ENCODE measurements at regions of chr2 and their contacts with region 1.

Region 1: GRCh38 chr2:156400706-156401678 is 35.2 kb upstream of the GPD2 start:
- DNase-seq: peak; percentile 76
- ATAC-seq: peak; percentile 75
- H3K4me3 ChIP-seq: peak overlapping the region; percentile 72 to 97 (median 83)
- H3K27ac ChIP-seq: peak overlapping the region; percentile 38
- H3K4me1 ChIP-seq: peaks cover 36% of the 10 kb centered on the region
- H3K27me3 ChIP-seq: peaks cover 0 to 8% of the 10 kb centered on the region in 2 experiments; a peak in 1 of 5 replicates
- CTCF ChIP-seq: no peak
- EP300 ChIP-seq: no peak; a peak in 1 of 4 replicates
- POLR2A ChIP-seq: no peak
- RAD21 ChIP-seq: no peak

Region 2: DNA sequence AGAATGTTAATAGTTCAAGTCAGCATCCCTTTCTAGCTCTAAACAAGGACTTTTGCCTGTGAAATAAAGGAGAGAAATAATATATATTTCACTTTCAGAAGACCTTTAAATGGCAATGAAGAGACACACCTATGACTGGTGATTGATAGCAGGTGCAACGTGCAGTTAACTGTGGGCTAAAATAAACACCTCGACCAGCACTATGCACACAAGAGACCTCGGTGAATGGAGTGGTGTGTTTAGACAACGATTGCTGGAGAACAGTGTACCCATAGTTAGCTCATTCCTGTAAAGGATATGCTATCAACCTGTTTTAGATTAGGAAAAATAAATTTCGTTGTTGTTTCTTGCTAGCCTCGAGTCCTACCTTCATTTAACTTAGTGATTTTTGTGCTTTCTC is 211.8 kb before region 1 on chr2:
- CTCF ChIA-PET with region 1: no interaction called
- POLR2A ChIA-PET with region 1: no interaction called
- in situ Hi-C with region 1: no loop called
- intact Hi-C with region 1: loop called (anchors 5 kb)
- DNase-seq: peak; percentile 83
- ATAC-seq: peak; percentile 100
- H3K4me3 ChIP-seq: peak overlapping the region in 1 of 3 experiments; percentile 22; a peak in 1 of 6 replicates
- H3K27ac ChIP-seq: peak overlapping the region; percentile 30
- H3K4me1 ChIP-seq: peaks cover 22% of the 10 kb centered on the region
- H3K27me3 ChIP-seq: no peaks in the 10 kb centered on the region
- CTCF ChIP-seq: no peak
- EP300 ChIP-seq: peak in 1 of 2 experiments; percentile 68; a peak in 1 of 4 replicates
- POLR2A ChIP-seq: no peak
- RAD21 ChIP-seq: no peak

Region 3: GRCh38 chr2:156332534-156333273 is 68.3 kb before region 1 on chr2 and contains the start of gene NR4A2:
- CTCF ChIA-PET with region 1: no interaction called
- POLR2A ChIA-PET with region 1: no interaction called
- in situ Hi-C with region 1: no loop called
- intact Hi-C with region 1: loop called (anchors 1 kb)
- DNase-seq: peak; percentile 16
- ATAC-seq: peak; percentile 60
- H3K4me3 ChIP-seq: peak within 1 kb of the TSS; percentile 51 to 77 (median 63)
- H3K27ac ChIP-seq: no peak within 1 kb of the TSS
- H3K4me1 ChIP-seq: peaks cover 30% of the 10 kb centered on the region
- H3K27me3 ChIP-seq: peaks cover 23 to 75% of the 10 kb centered on the region in 2 experiments
- CTCF ChIP-seq: no peak
- EP300 ChIP-seq: no peak
- POLR2A ChIP-seq: no peak
- RAD21 ChIP-seq: no peak
- total RNA-seq, gene NR4A2: not detected in 2 replicates

Region 4: GRCh38 chr2:156341452-156342253 is 59.3 kb before region 1 on chr2:
- CTCF ChIA-PET with region 1: no interaction called
- POLR2A ChIA-PET with region 1: no interaction called
- in situ Hi-C with region 1: no loop called
- intact Hi-C with region 1: loop called (anchors 2 kb)
- DNase-seq: peak; percentile 52
- ATAC-seq: peak; percentile 82
- H3K4me3 ChIP-seq: peak overlapping the region; percentile 72 to 78 (median 77)
- H3K27ac ChIP-seq: no peak overlapping the region
- H3K4me1 ChIP-seq: peaks cover 14% of the 10 kb centered on the region
- H3K27me3 ChIP-seq: peaks cover 3 to 37% of the 10 kb centered on the region in 2 experiments; a peak in 3 of 5 replicates
- CTCF ChIP-seq: no peak
- EP300 ChIP-seq: no peak
- POLR2A ChIP-seq: no peak
- RAD21 ChIP-seq: no peak